Thyroid gland (tissue), 4 donors: ENCODE measurements at regions of chr15 and their contacts with region 1.

Region 1: GRCh38 chr15:98421419-98422129 is 226.8 kb upstream of the IGF1R start:
- DNase-seq: peak; percentile 62 to 65
- H3K4me3 ChIP-seq: no peak overlapping the region
- H3K27ac ChIP-seq: no peak overlapping the region
- H3K4me1 ChIP-seq: peaks cover 9 to 12% of the 10 kb centered on the region in 2 donors
- H3K27me3 ChIP-seq: peaks cover 11% of the 10 kb centered on the region
- CTCF ChIP-seq: peak; percentile 84 to 100 (median 98)
- POLR2A ChIP-seq: no peak

Region 2: GRCh38 chr15:98311566-98312188 is 109.9 kb before region 1 on chr15:
- intact Hi-C with region 1: loop called (anchors 1 kb)
- DNase-seq: peak; percentile 83 to 88
- H3K4me3 ChIP-seq: no peak overlapping the region
- H3K27ac ChIP-seq: no peak overlapping the region
- H3K4me1 ChIP-seq: no peaks in the 10 kb centered on the region
- H3K27me3 ChIP-seq: no peaks in the 10 kb centered on the region
- CTCF ChIP-seq: peak in 5 of 6 experiments; percentile 63 to 75 (median 74)
- POLR2A ChIP-seq: no peak

Region 3: GRCh38 chr15:99197856-99198255 is 776.3 kb after region 1 on chr15:
- intact Hi-C with region 1: no loop called
- DNase-seq: no peak
- H3K4me3 ChIP-seq: no peak overlapping the region
- H3K27ac ChIP-seq: no peak overlapping the region
- H3K4me1 ChIP-seq: no peaks in the 10 kb centered on the region
- H3K27me3 ChIP-seq: no peaks in the 10 kb centered on the region
- CTCF ChIP-seq: no peak
- POLR2A ChIP-seq: no peak